Activated B cell treated with CpG ODN at 0.5 μM for 24 hours (primary cell): ENCODE measurements at regions of chr1 and their contacts with region 1.

Region 1: DNA sequence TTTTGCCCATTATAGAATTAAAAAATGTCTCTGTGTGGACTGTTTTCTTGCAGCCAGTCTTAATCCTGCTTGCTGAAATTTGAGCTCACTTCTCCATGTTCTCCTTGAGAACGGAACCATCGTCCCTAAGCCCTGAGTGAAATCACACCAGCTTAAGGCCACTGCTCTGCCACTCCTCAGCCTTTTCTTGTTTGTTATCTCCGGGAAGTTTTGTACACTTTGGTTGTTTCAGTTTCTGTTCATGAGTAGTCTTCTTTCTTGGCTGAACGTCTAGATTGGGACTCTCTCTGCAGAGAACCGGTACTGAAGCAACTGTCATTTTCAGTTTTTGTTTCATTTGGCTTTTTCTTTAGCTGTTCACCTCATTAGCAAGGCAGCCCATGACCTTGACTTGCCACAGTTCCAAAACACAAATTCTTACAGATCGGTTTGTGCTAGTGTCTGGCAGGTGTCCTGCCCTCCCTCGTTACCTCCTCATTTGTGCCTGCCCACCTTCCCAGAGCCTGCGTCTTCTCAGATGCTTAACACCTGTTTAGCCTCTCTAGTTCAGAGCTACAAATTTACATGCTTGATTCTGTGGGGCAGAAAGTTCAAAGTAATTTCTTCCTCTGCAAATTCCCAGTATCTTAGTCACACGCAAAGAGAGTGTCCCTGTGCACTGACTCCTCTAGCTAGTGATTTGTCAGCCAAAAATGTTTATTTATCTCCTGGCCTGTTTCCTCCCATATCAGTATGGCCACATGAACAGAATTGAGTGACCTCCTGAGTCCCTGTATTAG is 12.4 kb downstream of the PSEN2 start:
- DNase-seq: no peak
- ATAC-seq: peak; percentile 91
- H3K4me3 Mint-ChIP-seq: peak overlapping the region; percentile 58
- H3K27ac Mint-ChIP-seq: peak overlapping the region; percentile 84
- H3K4me1 Mint-ChIP-seq: peaks cover 55% of the 10 kb centered on the region
- H3K27me3 Mint-ChIP-seq: no peaks in the 10 kb centered on the region
- CTCF ChIP-seq: no peak

Region 2: DNA sequence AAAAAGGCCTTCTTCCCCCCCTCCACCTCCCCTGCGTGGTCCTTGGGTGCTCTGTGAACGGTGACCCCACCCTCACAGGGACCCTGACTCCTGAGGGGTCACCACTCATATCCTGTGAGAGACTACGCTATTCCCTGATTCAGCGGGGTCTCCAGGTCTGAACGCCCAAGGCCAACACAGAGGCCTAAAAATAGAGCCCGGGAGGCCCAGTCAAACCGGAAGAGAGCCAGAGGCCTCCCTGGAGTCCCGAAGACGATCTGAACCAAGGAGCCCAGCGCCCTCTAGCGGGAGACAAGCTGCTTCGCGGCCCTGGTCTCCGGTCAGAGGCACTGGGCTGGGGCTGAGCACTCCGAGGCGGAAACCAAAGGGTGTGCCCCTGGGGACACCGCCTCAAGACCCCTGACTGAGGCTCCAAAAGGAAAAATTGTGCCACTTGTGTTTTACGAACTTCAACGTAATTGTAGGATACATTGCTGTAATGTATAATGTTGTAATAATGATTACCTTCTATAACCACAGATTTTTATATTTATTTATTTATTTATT is 54.8 kb before region 1 on chr1:
- CTCF ChIA-PET with region 1: interaction called, 4 read pairs
- POLR2A ChIA-PET with region 1: no interaction called
- intact Hi-C with region 1: loop called (anchors 2 kb)
- DNase-seq: peak; percentile 82
- ATAC-seq: peak; percentile 97
- H3K4me3 Mint-ChIP-seq: peak overlapping the region; percentile 58
- H3K27ac Mint-ChIP-seq: peak overlapping the region; percentile 80
- H3K4me1 Mint-ChIP-seq: peaks cover 37% of the 10 kb centered on the region
- H3K27me3 Mint-ChIP-seq: no peaks in the 10 kb centered on the region
- CTCF ChIP-seq: peak; percentile 67

Region 3: GRCh38 chr1:226870401-226871279 is 12.2 kb before region 1 on chr1 and contains the start of gene PSEN2:
- CTCF ChIA-PET with region 1: no interaction called
- POLR2A ChIA-PET with region 1: interaction called, 6 read pairs
- intact Hi-C with region 1: loop called (anchors 1 kb)
- DNase-seq: peak; percentile 80
- ATAC-seq: peak; percentile 96
- H3K4me3 Mint-ChIP-seq: peak within 1 kb of the TSS; percentile 87
- H3K27ac Mint-ChIP-seq: peak within 1 kb of the TSS; percentile 53
- H3K4me1 Mint-ChIP-seq: peaks cover 24% of the 10 kb centered on the region
- H3K27me3 Mint-ChIP-seq: no peaks in the 10 kb centered on the region
- CTCF ChIP-seq: no peak
- total RNA-seq, gene PSEN2: 13.4 and 14.3 TPM in 2 replicates